ENCODE measurements at regions of chr3 and their contacts with region 1.

Region 1: DNA sequence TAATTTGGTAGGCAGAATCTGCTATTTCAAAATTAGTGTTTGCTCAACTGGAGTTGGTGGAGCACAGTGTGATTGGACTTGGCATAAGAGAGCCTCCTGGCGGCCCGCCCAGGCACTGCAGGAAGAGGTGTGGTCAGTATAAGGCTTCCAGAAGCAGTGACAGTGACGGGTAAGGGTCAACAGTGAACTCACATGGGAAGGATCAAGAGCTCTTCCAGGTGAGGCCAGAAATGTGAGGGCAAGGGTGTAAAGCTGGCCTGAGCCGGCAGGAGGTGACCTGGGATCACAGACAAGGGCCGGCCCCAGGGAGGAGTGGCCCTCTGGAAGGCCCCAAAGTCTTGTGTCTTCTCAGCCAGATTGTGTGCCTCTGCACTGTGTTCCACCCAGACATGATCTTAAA is 93.2 kb upstream of the RNF7 start:
- DNase-seq: peak; percentile 31
- H3K4me3 ChIP-seq: no peak overlapping the region
- H3K27ac ChIP-seq: no peak overlapping the region
- H3K4me1 ChIP-seq: no peaks in the 10 kb centered on the region
- H3K27me3 ChIP-seq: no peaks in the 10 kb centered on the region
- CTCF ChIP-seq: peak; percentile 86 to 89

Region 2: GRCh38 chr3:141575879-141576743 is 68.8 kb before region 1 on chr3:
- CTCF ChIA-PET with region 1: no interaction called
- dilution Hi-C with region 1: no loop called
- in situ Hi-C with region 1: no loop called
- intact Hi-C with region 1: loop called (anchors 10 kb)
- DNase-seq: no peak
- H3K4me3 ChIP-seq: no peak overlapping the region
- H3K27ac ChIP-seq: no peak overlapping the region
- H3K4me1 ChIP-seq: no peaks in the 10 kb centered on the region
- H3K27me3 ChIP-seq: no peaks in the 10 kb centered on the region
- CTCF ChIP-seq: peak; percentile 41 to 47

Region 3: GRCh38 chr3:141605883-141606282 is 39.0 kb before region 1 on chr3:
- CTCF ChIA-PET with region 1: no interaction called
- dilution Hi-C with region 1: no loop called
- in situ Hi-C with region 1: no loop called
- intact Hi-C with region 1: loop called (anchors 1 kb)
- DNase-seq: no peak
- H3K4me3 ChIP-seq: no peak overlapping the region
- H3K27ac ChIP-seq: no peak overlapping the region
- H3K4me1 ChIP-seq: no peaks in the 10 kb centered on the region
- H3K27me3 ChIP-seq: no peaks in the 10 kb centered on the region
- CTCF ChIP-seq: no peak

Region 4: DNA sequence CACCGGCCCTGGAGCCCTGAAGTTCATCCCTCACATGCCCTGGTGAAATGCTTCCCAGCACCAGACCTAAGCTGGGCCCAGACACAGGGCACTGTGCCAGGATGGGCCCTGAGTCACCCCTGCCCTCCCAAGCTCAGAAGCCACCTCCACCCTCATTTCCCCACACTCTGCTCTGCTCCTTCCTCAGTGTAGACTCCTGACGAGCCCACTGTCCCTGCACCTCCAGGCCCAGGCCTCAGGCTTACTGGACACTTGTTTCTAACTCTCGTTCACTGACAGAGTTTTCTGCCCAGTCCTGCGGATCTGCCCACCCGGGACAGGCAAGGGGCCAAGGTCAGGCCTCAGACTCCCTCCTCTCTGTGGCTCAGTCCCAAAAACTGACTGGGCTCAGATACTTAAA is 19.4 kb before region 1 on chr3:
- CTCF ChIA-PET with region 1: no interaction called
- dilution Hi-C with region 1: no loop called
- in situ Hi-C with region 1: no loop called
- intact Hi-C with region 1: no loop called
- DNase-seq: peak; percentile 44
- H3K4me3 ChIP-seq: no peak overlapping the region
- H3K27ac ChIP-seq: no peak overlapping the region
- H3K4me1 ChIP-seq: peaks cover 10% of the 10 kb centered on the region
- H3K27me3 ChIP-seq: no peaks in the 10 kb centered on the region
- CTCF ChIP-seq: no peak

Region 5: GRCh38 chr3:141830508-141830907 is 185.6 kb after region 1 on chr3:
- CTCF ChIA-PET with region 1: no interaction called
- dilution Hi-C with region 1: no loop called
- in situ Hi-C with region 1: no loop called
- intact Hi-C with region 1: no loop called
- DNase-seq: peak; percentile 97
- H3K4me3 ChIP-seq: no peak overlapping the region
- H3K27ac ChIP-seq: peak overlapping the region; percentile 88
- H3K4me1 ChIP-seq: peaks cover 37% of the 10 kb centered on the region
- H3K27me3 ChIP-seq: no peaks in the 10 kb centered on the region
- CTCF ChIP-seq: no peak